Mammary epithelial cell (primary cell): ENCODE measurements at regions of chr2 and their contacts with region 1.

Region 1: DNA sequence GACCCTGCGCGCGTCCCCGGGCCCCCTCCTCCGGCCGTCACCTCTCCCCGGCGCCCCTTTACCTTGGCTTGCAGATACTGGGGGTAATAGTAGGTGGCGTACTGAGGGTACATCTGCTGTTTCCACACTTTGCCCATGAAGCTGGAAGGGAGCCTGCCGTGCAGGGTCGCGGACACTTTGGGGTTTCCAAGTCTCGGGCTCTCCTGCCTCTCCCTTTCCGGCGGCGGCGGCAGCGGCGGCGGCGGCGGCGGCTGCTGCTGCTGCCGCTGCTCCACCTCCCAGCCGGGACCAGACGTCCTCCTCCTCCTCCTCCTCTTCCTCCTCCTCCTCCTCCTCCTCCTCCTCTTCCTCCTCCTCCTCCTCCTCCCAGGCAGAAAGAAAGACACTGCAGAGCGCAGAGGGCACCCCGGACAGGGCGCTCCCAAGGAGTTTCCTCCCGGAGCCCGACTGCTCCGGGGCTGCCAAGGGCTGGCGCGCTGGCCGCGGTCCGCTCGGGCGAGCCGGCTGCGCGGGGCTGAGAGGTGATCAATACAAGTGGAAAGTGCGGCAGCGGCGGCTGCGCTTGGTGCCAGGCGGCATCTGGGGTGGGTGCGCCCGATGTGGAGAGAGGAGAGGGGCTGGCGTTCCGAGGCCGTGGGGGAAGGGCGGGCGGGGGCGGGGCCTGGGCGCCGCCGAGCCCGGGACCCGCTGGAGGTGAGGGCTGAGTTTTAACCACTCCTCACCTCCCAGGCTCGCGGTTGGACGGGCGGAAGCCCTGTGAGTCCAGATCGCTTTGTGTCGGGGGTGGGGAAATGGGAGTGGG is at the start of gene RBMS1:
- DNase-seq: peak; percentile 59
- H3K4me3 ChIP-seq: peak within 1 kb of the TSS; percentile 72 to 95 (median 72)
- H3K27ac ChIP-seq: peak within 1 kb of the TSS; percentile 84
- H3K4me1 ChIP-seq: peaks cover 11% of the 10 kb centered on the region
- H3K27me3 ChIP-seq: no peaks in the 10 kb centered on the region
- CTCF ChIP-seq: no peak
- total RNA-seq, gene RBMS1: 54.8 to 61.3 TPM

Region 2: GRCh38 chr2:160324161-160324800 is 169.1 kb before region 1 on chr2:
- CTCF ChIA-PET with region 1: no interaction called
- dilution Hi-C with region 1: no loop called
- in situ Hi-C with region 1: no loop called
- intact Hi-C with region 1: loop called (anchors 10 kb)
- DNase-seq: peak; percentile 32
- H3K4me3 ChIP-seq: no peak overlapping the region
- H3K27ac ChIP-seq: no peak overlapping the region
- H3K4me1 ChIP-seq: no peaks in the 10 kb centered on the region
- H3K27me3 ChIP-seq: no peaks in the 10 kb centered on the region
- CTCF ChIP-seq: peak; percentile 80 to 84

Region 3: GRCh38 chr2:160353166-160353565 is 140.3 kb before region 1 on chr2:
- CTCF ChIA-PET with region 1: no interaction called
- dilution Hi-C with region 1: no loop called
- in situ Hi-C with region 1: no loop called
- intact Hi-C with region 1: loop called (anchors 2 kb)
- DNase-seq: no peak
- H3K4me3 ChIP-seq: no peak overlapping the region
- H3K27ac ChIP-seq: peak overlapping the region; percentile 53
- H3K4me1 ChIP-seq: peaks cover 28% of the 10 kb centered on the region
- H3K27me3 ChIP-seq: no peaks in the 10 kb centered on the region
- CTCF ChIP-seq: peak in 1 of 2 donors; percentile 51

Region 4: DNA sequence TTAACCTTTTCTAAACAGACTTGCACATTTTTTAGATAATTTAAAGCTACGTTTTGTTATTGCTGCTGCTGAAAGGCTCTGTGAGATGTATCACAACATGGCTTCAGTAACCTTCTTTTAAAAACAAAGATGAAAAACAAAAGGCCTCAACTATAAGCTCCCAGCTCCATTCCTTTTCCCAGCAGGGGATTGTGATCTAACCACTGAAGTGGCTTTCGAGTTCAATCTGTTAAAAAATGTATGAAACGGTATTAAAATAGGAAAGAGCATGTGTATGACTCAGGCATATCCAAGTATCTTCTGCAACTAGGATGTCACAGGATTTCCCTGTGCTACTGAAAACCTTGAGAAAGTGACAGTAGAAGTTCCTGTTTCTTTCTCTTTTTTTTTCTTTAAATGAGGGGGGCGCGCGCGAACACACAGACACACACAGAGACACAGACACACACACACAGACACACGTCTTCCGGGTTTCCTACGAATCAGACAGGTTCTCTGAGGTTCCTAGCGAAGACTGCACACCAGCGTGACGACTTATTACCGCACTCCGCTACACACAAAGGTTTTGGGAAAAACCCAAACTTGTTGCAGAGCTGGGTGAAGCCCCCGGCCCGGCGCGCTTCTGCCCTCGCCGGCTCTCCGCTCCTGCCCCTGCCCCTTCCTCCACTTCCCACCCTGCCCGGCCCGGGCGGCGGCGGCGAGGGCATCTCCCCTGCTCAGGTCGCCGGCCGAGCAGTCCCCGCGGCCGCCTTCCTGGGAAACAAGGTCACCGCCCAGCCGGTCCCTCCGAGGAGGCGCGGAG is 86.6 kb before region 1 on chr2:
- CTCF ChIA-PET with region 1: no interaction called
- dilution Hi-C with region 1: no loop called
- in situ Hi-C with region 1: no loop called
- intact Hi-C with region 1: loop called (anchors 5 kb)
- DNase-seq: peak; percentile 80
- H3K4me3 ChIP-seq: peak overlapping the region; percentile 76 to 85 (median 84)
- H3K27ac ChIP-seq: peak overlapping the region; percentile 87
- H3K4me1 ChIP-seq: peaks cover 64% of the 10 kb centered on the region
- H3K27me3 ChIP-seq: no peaks in the 10 kb centered on the region
- CTCF ChIP-seq: no peak

Region 5: DNA sequence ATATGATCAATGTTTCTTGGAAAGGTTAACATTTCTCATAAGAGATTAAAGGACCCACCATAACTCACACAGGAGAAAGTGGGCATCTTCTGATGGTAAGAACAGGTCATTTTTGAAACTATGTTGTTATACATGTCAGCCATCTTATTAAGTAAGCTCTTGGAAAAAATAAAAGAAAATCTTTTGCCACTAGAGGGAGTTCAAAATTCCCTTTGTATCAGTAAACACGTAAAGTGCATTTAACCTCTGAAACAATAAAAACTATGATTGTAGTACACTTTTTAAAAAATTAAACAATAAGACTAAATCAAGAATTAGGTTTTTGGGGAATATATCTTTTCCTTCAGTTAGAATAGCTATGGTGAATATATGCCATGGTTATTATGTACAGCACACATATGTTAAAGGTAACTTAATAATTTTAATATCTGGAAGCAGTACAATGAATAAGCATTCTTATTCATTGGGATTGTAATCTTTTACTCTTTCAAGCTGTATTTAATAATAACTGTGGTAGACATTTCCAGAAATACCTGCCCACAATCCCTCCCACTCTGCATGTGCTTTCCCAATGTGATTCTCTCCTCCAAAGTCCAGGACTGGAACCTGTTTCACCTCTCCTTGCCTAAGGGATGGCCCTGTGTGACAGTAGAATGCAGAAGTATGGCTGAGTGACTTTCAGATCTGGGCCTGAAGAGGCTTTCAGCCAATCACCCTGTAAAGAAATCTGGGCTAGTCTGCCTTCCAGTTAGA is 64.0 kb before region 1 on chr2:
- CTCF ChIA-PET with region 1: interaction called, 7 read pairs
- dilution Hi-C with region 1: no loop called
- in situ Hi-C with region 1: no loop called
- intact Hi-C with region 1: loop called (anchors 2 kb)
- DNase-seq: peak; percentile 42
- H3K4me3 ChIP-seq: no peak overlapping the region
- H3K27ac ChIP-seq: peak overlapping the region; percentile 11
- H3K4me1 ChIP-seq: peaks cover 47% of the 10 kb centered on the region
- H3K27me3 ChIP-seq: no peaks in the 10 kb centered on the region
- CTCF ChIP-seq: peak; percentile 46 to 57

Region 6: GRCh38 chr2:160647967-160648685 is 154.7 kb after region 1 on chr2:
- CTCF ChIA-PET with region 1: no interaction called
- dilution Hi-C with region 1: no loop called
- in situ Hi-C with region 1: no loop called
- intact Hi-C with region 1: loop called (anchors 2 kb)
- DNase-seq: peak; percentile 60
- H3K4me3 ChIP-seq: peak overlapping the region in 2 of 3 experiments; percentile 33 to 40
- H3K27ac ChIP-seq: peak overlapping the region; percentile 48
- H3K4me1 ChIP-seq: peaks cover 69% of the 10 kb centered on the region
- H3K27me3 ChIP-seq: no peaks in the 10 kb centered on the region
- CTCF ChIP-seq: no peak

Region 7: DNA sequence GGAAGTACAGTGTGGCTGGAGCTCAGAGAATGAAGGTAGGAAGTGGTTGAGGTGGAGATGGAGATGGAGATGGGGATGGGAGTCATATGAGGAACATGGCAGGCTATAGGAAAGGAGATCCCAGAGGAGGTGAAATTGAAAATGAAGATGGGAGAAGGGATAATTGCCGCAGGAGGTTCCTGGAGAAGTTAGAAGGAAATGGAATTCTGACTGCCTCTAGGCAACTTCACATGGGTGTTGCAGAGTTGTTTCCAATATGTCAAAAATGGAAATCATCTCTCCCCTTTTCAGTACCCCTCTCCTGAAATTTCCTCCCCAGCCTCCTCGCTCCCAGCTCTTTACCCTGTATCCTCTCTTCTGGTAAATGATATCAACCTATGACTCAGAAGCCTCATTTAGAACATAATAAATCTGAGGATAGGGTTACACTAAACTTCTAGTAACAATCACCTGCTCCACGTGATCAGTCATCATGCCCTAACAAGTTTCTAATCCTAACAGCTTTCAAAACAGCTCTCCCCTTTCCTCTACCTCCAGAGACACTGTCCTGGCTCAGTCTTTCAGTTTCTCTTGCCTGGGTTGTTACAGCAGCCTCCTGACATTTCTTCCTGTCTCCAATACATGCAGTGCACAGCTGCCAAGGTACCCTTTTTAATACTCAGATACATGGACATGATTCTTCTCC is 202.1 kb after region 1 on chr2:
- CTCF ChIA-PET with region 1: no interaction called
- dilution Hi-C with region 1: no loop called
- in situ Hi-C with region 1: no loop called
- intact Hi-C with region 1: loop called (anchors 5 kb)
- DNase-seq: peak; percentile 84
- H3K4me3 ChIP-seq: no peak overlapping the region
- H3K27ac ChIP-seq: no peak overlapping the region
- H3K4me1 ChIP-seq: peaks cover 14% of the 10 kb centered on the region
- H3K27me3 ChIP-seq: no peaks in the 10 kb centered on the region
- CTCF ChIP-seq: no peak